ENCODE measurements at regions of chr17 and their contacts with region 1.

Region 1: DNA sequence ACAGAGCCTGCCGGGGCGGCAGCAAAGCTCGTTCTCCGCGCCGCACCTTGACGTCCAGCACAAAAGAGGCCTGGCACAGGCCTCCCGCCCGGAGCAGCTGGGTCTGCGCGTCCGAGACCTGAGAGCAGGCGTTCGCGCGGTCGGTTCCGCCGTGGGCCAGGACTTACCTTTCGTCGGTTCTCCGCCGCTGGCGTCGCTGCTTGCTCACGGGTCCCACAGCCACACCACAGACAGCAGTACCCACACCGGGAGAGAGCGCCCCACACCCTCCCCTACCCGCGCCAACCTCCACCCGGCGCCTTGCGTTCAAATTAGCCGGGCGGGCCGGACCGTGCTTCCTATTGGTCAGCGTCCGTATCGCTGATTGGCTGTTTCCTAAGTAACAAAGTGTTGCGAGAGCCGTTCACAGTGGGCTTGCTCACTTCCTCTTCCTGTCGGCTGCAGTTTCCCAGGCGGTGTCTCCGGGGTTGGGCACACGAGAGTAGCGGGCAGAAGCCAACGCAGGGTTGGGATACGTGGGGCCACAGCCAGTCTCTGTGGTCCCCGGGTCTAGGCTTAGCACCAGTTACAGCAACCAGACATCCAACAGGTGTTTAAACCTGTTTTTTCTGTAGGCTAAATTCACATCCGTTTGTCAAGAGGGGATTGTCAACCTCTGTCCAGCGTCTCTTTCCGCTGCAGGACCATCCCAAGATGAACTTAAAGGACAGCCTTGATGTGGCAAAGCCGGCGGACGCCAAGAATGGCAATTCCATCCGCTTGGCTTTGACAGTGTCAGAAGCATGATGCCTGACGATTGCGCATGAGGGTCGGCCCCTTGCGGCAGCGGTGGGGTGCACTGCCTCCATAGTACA is at the start of gene KIF18B:
- DNase-seq: peak; percentile 90 to 97 (median 94)
- H3K4me3 ChIP-seq: peak within 1 kb of the TSS; percentile 69 to 94 (median 71)
- H3K4me3 Mint-ChIP-seq: peak within 1 kb of the TSS; percentile 86 to 95
- H3K27ac ChIP-seq: peak within 1 kb of the TSS; percentile 32 to 82
- H3K27ac Mint-ChIP-seq: peak within 1 kb of the TSS; percentile 86 to 94 (median 90)
- H3K4me1 ChIP-seq: peaks cover 18 to 30% of the 10 kb centered on the region in 2 donors
- H3K4me1 Mint-ChIP-seq: peaks cover 18% of the 10 kb centered on the region
- H3K27me3 ChIP-seq: no peaks in the 10 kb centered on the region
- H3K27me3 Mint-ChIP-seq: peaks cover 0 to 6% (median 2%) of the 10 kb centered on the region in 3 donors
- CTCF ChIP-seq: no peak
- polyA plus RNA-seq, gene KIF18B: not detected

Region 2: DNA sequence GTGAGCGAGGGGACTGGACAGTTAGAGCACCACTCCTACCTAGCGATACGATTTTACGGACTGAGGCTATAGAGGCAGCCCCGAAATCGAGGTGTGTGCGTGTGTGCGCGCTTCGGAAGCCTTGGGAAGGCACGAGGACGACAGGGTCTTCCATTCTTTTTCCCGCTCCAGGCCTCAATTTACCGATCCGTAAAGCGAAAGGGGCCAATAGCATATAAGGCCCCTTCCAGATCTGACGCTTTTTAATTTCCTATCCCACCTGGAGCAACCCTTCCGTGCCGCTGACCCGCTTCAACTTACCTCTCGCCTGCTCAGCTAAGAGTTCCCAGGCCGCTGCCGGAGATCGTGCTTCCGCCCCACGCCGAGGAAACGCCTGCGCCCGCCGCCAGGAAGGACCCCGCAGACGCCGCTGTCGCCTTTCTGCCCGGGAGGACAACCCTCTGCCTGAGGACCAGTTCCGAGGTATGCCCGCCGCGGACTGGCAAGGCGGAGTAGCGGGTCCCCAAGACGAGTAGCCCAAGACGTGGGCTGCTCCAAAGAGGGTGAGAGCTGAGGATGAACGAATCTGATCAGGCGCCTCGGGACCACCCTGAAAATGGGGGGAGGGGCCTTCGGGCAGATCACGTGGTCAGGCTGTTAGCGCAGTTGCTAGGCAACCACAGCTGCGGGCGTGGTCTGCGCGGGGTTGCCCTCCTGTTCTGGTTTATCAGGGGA is 48.5 kb before region 1 on chr17 and contains the start of gene EFTUD2:
- intact Hi-C with region 1: loop called (anchors 2 to 5 kb)
- DNase-seq: peak; percentile 85 to 89 (median 87)
- H3K4me3 ChIP-seq: peak within 1 kb of the TSS; percentile 91 to 97 (median 95)
- H3K4me3 Mint-ChIP-seq: peak within 1 kb of the TSS; percentile 86 to 96
- H3K27ac ChIP-seq: peak within 1 kb of the TSS; percentile 96 to 98
- H3K27ac Mint-ChIP-seq: peak within 1 kb of the TSS; percentile 99 to 100 (median 100)
- H3K4me1 ChIP-seq: peaks cover 38 to 42% of the 10 kb centered on the region in 2 donors
- H3K4me1 Mint-ChIP-seq: peaks cover 35% of the 10 kb centered on the region
- H3K27me3 ChIP-seq: no peaks in the 10 kb centered on the region
- H3K27me3 Mint-ChIP-seq: no peaks in the 10 kb centered on the region
- CTCF ChIP-seq: no peak
- polyA plus RNA-seq, gene EFTUD2: 82.9 to 144 (median 104) TPM

Region 3: DNA sequence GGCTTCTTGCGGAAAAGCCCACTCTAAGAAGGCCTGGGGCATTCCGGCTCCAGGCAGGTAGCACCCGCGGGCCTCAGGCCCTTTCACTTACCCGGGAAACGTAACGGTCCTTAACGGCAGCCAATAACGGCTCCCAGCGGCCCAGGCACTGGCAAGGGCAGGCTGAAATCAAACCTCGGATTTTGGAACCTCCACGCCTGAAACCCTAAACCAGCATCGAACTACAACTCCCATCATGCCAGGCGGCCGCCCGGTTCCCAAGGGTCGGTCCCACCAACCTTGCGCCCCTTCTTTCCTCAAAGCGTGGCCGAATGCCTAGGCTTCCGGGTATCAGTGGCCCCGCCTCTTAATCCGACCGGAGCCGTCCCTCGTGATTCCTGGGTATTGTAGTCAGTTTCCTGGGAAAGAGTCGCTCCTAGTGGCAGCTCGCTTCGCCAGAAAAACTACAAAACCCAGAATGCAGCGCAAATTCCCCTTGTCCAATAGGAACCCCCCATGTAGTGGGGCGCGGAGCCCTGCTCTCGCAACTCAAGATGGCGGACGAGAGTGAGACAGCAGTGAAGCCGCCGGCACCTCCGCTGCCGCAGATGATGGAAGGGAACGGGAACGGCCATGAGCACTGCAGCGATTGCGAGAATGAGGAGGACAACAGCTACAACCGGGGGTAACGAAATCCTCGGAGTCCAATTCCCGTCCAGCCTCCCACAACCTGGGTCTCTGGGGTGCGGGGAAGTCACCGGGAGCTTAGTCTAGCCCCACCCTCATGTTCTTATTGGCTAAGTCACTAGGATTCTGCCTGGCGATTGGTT is 113.3 kb after region 1 on chr17 and contains the start of gene NMT1:
- intact Hi-C with region 1: loop called in 1 of 2 experiments (anchors 2 kb)
- DNase-seq: peak; percentile 98 to 100 (median 98)
- H3K4me3 ChIP-seq: peak within 1 kb of the TSS; percentile 76 to 99 (median 94)
- H3K4me3 Mint-ChIP-seq: peak within 1 kb of the TSS; percentile 99 to 100
- H3K27ac ChIP-seq: peak within 1 kb of the TSS; percentile 72 to 99
- H3K27ac Mint-ChIP-seq: peak within 1 kb of the TSS; percentile 96 to 100 (median 99)
- H3K4me1 ChIP-seq: peaks cover 56 to 59% of the 10 kb centered on the region in 2 donors
- H3K4me1 Mint-ChIP-seq: peaks cover 51% of the 10 kb centered on the region
- H3K27me3 ChIP-seq: no peaks in the 10 kb centered on the region
- H3K27me3 Mint-ChIP-seq: no peaks in the 10 kb centered on the region
- CTCF ChIP-seq: no peak
- polyA plus RNA-seq, gene NMT1: 27.2 to 50.2 (median 45.1) TPM